HEK293 (cell line): ENCODE measurements at regions of chr15 and their contacts with region 1.

Region 1: DNA sequence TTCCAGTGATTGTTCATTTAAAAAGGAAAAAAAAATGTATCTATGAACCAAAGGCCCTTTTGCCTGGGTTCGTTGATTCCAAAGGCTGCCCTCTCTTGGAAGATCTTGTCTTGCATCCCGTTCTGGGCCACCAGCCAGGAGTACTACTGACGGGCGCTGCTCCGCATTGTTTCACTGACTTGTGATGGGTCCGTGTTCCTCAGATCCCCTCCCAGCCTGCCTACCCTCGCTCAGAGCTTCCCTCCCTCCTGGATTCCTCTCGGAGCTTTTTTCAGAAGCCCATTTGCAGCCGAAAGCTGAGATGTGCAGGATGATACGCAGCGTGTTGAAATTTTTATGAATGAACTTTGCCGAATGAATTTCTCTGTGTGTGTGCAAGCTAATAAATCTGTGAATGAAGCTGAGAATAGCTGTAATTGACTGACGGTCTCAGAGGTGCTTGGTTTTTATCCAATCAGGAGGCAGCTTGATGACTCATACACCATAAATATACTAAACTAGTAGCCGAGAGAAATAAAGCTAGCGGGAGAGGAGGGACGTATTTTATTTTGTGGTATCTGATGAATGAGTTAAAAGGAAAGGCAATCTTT is at the start of gene SHC4:
- H3K4me3 ChIP-seq: peak within 1 kb of the TSS; percentile 44
- H3K27ac ChIP-seq: peak within 1 kb of the TSS; percentile 49; the same call in 1 of the 2 replicates
- H3K4me1 ChIP-seq: no peaks in the 10 kb centered on the region
- CTCF ChIP-seq: no peak

Region 2: DNA sequence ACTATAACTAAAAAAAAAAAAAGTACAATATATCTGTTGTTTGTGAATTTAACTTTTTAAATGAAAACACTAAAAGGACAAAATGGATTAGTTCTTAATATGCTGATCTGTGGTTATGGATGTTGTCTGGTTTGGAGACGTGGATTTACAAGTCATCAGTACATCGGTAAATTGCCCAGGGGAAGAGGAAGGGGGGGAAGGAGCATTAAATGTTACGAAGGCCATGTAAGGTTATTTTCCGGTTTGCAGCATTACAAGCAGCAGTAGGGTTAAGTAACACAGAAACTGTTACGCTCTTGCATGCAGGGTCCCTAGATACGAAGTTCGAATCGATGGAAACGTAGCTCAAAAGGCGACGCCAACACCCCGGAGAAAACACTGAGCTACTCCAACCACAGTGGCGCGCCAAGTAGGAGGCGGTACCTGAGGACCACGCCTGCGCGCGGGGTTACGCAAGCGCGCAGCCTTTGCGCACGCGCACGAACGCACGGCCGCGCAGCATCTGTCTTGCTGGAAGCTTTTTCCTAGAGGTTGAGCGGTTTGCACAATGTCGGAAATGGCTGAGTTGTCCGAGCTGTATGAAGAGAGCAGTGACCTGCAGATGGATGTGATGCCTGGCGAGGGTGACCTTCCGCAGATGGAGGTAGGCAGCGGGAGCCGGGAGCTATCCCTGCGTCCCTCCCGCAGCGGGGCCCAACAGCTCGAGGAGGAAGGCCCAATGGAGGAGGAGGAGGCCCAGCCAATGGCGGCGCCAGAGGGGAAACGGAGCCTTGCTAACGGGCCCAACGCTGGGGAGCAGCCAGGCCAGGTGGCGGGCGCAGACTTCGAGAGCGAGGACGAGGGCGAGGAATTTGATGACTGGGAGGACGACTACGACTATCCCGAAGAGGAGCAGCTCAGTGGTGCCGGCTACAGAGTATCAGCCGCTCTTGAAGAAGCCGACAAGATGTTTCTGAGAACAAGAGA is 85.7 kb before region 1 on chr15 and contains the start of gene EID1:
- CTCF ChIA-PET with region 1: interaction called, 4 read pairs
- POLR2A ChIA-PET with region 1: interaction called, 13 read pairs
- H3K4me3 ChIP-seq: peak within 1 kb of the TSS; percentile 95
- H3K27ac ChIP-seq: peak within 1 kb of the TSS; percentile 62
- H3K4me1 ChIP-seq: no peaks in the 10 kb centered on the region
- CTCF ChIP-seq: peak; percentile 64; the same call in 1 of the 2 replicates

Region 3: DNA sequence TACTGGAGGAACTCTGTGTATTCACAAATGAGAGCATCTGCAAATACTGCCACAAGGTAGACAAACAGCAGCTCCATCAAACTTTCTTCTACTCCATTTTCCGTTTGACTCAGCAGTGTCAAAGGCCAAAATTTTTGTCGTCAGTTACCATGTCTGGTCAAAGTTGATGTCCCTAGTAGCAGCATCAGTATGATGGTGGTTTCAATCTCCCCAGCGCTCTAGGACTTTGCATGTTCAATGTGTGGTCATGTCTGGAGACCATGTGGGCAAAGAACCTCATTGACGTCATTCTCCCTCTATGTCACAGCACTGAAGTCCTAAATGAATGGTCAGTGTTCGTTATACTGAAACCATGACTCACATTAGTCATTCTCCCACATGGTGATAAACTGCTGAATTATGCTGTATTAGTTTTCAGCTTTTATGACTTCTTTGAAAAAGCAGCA is 23.1 kb before region 1 on chr15:
- CTCF ChIA-PET with region 1: no interaction called
- POLR2A ChIA-PET with region 1: no interaction called
- H3K4me3 ChIP-seq: no peak overlapping the region
- H3K27ac ChIP-seq: no peak overlapping the region
- H3K4me1 ChIP-seq: no peaks in the 10 kb centered on the region
- CTCF ChIP-seq: no peak

Region 4: DNA sequence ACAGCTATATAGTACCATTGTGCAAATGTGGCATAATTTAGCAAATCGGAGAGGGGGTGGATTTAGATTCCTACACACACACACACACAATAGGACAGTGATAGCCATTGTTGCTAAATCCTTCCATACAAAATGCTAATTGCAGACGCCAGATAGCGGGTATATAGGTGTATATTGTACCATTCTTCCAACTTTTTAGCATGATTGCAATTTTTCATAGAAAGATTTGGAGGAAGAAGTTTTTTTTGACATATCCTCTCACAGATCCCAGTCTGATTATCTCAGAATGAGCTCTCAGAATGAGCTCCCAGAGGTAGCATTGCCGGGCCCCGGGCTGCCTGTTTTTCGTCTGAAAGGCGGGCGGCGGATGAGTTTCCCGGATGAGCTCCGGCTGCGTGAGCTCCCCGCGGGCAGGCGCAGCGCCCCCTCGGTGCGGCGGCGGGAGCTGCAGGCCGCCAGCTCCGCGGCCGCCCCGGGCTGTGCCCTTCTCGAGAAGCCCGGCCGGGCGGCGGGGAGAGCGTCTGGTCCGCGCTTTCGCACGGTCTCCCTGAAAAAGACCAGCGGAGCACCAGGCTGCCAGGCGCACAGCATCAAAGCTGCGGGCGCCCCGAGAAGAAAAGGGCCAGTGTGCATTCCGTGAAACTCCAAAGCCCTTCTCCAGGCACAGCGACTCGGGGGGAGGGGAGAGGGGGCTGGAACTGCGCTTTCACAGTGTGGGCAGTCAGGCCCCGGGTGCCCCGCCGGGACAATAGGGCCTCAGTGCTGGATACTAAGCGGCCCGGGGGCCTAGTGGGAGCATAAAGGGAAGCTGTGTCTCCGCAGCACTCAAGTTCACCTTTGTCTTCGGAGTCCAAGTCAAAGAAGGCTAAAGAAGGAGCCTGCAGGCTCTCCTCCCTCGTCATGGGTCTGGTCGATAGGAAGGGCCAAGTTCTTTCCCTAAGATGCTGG is 12.1 kb after region 1 on chr15:
- CTCF ChIA-PET with region 1: interaction called, 34 read pairs
- POLR2A ChIA-PET with region 1: interaction called, 9 read pairs
- H3K4me3 ChIP-seq: peak overlapping the region; percentile 41
- H3K27ac ChIP-seq: no peak overlapping the region
- H3K4me1 ChIP-seq: no peaks in the 10 kb centered on the region
- CTCF ChIP-seq: no peak

Region 5: DNA sequence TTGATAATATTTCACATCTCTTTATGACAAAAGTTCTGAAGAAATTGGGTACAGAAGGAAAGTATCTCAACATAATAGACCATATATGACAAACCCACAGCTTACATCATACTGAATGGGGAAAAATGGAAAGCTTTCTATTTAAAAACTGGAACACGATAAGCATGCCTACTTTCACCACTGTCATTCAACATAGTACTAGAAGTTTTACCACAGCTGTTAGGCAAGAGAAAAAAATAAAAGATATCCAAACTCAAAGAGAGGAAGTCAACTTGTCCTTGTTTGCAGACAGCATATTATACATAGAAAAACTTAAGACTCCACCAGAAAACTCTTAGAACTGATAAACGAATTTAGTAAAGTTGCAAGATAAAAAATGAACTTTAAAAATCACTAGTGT is 151.4 kb after region 1 on chr15:
- CTCF ChIA-PET with region 1: no interaction called
- POLR2A ChIA-PET with region 1: no interaction called
- H3K4me3 ChIP-seq: no peak overlapping the region
- H3K27ac ChIP-seq: no peak overlapping the region
- H3K4me1 ChIP-seq: no peaks in the 10 kb centered on the region
- CTCF ChIP-seq: no peak